Activated CD8-positive, alpha-beta T cell treated with anti-CD3 and anti-CD28 coated beads for 36 hours (primary cell): ENCODE measurements at regions of chr13 and their contacts with region 1.

Region 1: DNA sequence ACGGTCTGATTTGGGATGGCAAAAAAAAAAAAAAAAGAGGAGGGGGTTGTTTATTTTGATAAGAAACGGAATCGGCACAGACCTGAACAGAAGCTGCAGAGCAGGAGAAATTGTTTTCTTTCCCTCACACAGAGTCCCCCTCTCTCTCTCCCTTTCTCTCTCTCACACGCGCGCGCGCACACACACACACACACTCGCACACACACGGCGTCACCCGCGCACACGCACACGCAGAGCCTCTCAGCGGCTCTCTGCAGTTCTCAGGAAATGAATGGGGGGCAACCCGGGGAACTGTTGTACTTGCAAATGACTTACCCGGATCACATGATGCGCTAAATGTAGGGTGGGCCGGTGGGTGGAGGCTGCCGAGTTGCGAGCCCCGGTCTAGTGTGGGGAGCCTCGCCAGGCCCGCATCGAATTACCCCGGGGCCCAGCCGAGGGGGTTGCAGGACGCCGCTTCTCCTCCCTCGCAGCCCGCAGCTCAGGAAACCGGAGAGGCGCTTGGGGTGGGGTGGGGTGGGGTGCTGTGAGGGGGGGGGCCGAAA is 475 bp downstream of the KLF12 start:
- DNase-seq: peak; percentile 96
- ATAC-seq: peak; percentile 64
- H3K4me3 Mint-ChIP-seq: peak overlapping the region; percentile 91
- H3K27ac Mint-ChIP-seq: peak overlapping the region; percentile 99
- H3K4me1 Mint-ChIP-seq: peaks cover 31% of the 10 kb centered on the region
- H3K27me3 Mint-ChIP-seq: no peaks in the 10 kb centered on the region
- CTCF ChIP-seq: no peak

Region 2: DNA sequence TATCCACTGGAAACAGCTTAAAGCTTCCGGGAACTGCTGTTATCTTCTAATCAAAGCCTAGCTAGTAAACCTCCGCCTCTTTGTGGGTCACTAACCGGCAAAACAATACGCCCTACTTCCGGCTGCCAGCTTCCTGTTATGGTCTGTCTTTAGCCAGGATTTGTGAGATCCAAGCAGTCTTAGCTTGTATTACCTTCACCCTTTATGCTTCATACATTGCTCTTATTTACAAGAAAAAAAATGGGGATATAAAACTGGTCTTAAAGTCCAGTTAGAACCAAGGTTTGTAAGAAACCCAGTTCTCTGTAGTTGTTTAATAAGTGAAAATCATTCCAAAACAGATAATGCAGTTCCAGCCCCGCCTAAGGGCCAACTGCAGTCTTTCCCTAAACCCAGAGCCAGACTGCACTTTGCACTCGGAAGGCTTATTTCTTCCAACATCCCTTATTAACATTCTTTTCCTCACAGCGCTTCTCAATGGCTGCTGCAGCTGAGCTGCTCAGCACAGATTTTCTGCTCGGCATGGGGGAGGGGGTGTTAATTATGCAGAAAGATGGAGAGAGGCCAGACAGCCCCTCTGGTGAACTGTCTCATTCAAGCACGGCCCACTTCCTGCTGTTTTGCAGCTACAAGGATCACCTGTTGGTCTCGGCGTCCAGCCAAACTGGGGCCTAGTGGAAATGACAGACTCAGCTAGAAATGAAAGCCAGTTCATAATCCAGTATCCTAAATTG is 367.9 kb before region 1 on chr13:
- CTCF ChIA-PET with region 1: no interaction called
- POLR2A ChIA-PET with region 1: no interaction called
- intact Hi-C with region 1: loop called (anchors 10 kb)
- DNase-seq: peak; percentile 93
- ATAC-seq: peak; percentile 95
- H3K4me3 Mint-ChIP-seq: peak overlapping the region; percentile 67
- H3K27ac Mint-ChIP-seq: peak overlapping the region; percentile 97
- H3K4me1 Mint-ChIP-seq: peaks cover 71% of the 10 kb centered on the region
- H3K27me3 Mint-ChIP-seq: no peaks in the 10 kb centered on the region
- CTCF ChIP-seq: no peak

Region 3: GRCh38 chr13:73943137-73943964 is 190.4 kb before region 1 on chr13:
- CTCF ChIA-PET with region 1: no interaction called
- POLR2A ChIA-PET with region 1: interaction called, 8 read pairs
- intact Hi-C with region 1: loop called (anchors 10 kb)
- DNase-seq: no peak
- ATAC-seq: peak; percentile 92
- H3K4me3 Mint-ChIP-seq: peak overlapping the region; percentile 59
- H3K27ac Mint-ChIP-seq: peak overlapping the region; percentile 89
- H3K4me1 Mint-ChIP-seq: peaks cover 80% of the 10 kb centered on the region
- H3K27me3 Mint-ChIP-seq: no peaks in the 10 kb centered on the region
- CTCF ChIP-seq: no peak

Region 4: GRCh38 chr13:74026753-74027152 is 107.0 kb before region 1 on chr13:
- CTCF ChIA-PET with region 1: no interaction called
- POLR2A ChIA-PET with region 1: interaction called, 4 read pairs
- intact Hi-C with region 1: loop called (anchors 5 kb)
- DNase-seq: peak; percentile 83
- ATAC-seq: peak; percentile 96
- H3K4me3 Mint-ChIP-seq: peak overlapping the region; percentile 75
- H3K27ac Mint-ChIP-seq: peak overlapping the region; percentile 97
- H3K4me1 Mint-ChIP-seq: peaks cover 75% of the 10 kb centered on the region
- H3K27me3 Mint-ChIP-seq: no peaks in the 10 kb centered on the region
- CTCF ChIP-seq: no peak

Region 5: DNA sequence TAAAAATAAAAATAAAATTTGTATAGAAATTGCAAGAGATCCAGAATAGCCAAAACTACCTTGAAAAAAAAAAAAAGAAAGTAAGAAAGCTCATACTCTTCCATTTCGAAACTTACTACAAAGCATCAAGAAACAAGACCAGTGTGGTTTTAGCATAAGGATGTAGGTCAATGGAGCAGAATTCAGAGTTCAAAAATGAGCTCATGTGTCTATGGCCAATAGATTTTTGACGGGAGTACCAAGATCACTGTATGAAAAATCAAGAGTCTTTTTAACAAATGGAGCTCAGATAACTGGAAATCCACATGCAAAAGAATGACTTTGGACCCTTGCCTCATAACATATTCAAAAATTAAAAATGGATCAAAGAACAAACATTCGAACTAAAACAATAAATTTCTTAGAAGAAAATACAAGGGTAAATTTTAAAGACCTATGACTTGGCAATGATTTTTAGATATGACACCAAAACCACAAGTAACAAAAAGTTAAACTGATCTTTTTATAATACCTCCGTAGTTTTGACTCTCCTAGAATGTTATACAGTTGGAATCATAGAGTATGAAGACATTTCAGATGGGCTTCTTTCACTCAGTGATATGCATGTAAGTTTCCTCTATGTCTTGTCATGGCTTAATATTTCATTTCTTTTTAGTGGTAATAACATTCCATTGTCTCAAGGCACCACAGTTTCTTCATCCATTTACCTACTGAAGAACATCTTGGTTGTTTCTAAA is 42.7 kb before region 1 on chr13:
- CTCF ChIA-PET with region 1: no interaction called
- POLR2A ChIA-PET with region 1: interaction called, 7 read pairs
- intact Hi-C with region 1: loop called (anchors 5 kb)
- DNase-seq: no peak
- ATAC-seq: peak; percentile 77
- H3K4me3 Mint-ChIP-seq: peak overlapping the region; percentile 62
- H3K27ac Mint-ChIP-seq: peak overlapping the region; percentile 86
- H3K4me1 Mint-ChIP-seq: peaks cover 63% of the 10 kb centered on the region
- H3K27me3 Mint-ChIP-seq: no peaks in the 10 kb centered on the region
- CTCF ChIP-seq: no peak

Region 6: DNA sequence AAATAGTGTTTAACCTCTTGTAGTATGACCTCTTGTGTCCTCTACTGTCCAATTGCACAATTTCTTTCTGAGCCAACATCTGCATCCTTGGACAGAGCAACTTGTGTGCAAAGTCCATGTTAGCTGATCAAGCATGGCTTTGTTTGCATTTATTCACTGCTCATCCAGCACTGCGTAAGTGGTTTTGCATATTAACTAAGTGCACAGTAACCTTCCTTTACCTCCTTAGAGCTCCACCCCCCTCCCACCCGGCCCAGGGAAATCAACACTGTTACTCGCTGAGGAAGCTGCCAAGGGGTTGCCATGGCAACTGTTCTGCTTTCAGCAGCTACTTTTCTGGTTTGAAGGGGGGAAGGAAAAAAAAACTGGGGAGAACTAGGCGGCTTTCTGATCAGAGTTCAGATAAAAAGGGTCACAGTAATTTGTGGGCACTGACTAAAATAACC is 154.0 kb after region 1 on chr13:
- CTCF ChIA-PET with region 1: interaction called, 22 read pairs
- POLR2A ChIA-PET with region 1: interaction called, 28 read pairs
- intact Hi-C with region 1: loop called (anchors 5 kb)
- DNase-seq: peak; percentile 91
- ATAC-seq: peak; percentile 57
- H3K4me3 Mint-ChIP-seq: peak overlapping the region; percentile 67
- H3K27ac Mint-ChIP-seq: peak overlapping the region; percentile 73
- H3K4me1 Mint-ChIP-seq: peaks cover 66% of the 10 kb centered on the region
- H3K27me3 Mint-ChIP-seq: no peaks in the 10 kb centered on the region
- CTCF ChIP-seq: no peak